PC-3 (cell line): ENCODE measurements at regions of chr4 and their contacts with region 1.

Region 1: DNA sequence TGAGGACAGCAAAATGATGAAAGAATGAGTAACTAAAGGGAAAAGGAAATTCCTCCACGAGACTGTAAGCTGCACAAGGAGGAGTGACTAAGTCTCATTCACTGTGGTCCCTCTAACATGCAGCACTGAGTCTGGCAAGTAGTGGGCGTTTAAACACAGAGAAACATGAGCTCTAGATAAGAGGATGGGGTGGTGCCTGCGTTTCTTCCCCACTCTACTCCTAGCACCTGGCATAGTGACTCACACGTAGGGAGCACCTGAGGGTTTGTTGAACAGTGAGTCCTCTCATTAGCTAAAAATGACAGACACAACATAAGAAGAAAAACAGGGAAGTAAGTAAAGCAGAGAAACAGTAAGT is 105.8 kb upstream of the CBR4 start:
- DNase-seq: peak; percentile 87
- ATAC-seq: peak; percentile 96
- H3K4me3 ChIP-seq: no peak overlapping the region
- H3K27ac ChIP-seq: peak overlapping the region; percentile 85
- H3K4me1 ChIP-seq: peaks cover 30% of the 10 kb centered on the region
- H3K27me3 ChIP-seq: no peaks in the 10 kb centered on the region
- CTCF ChIP-seq: peak; percentile 33

Region 2: GRCh38 chr4:169079942-169080827 is 35.7 kb before region 1 on chr4:
- CTCF ChIA-PET with region 1: no interaction called
- POLR2A ChIA-PET with region 1: no interaction called
- intact Hi-C with region 1: loop called (anchors 5 kb)
- DNase-seq: peak; percentile 76
- ATAC-seq: peak; percentile 88
- H3K4me3 ChIP-seq: peak overlapping the region; percentile 54
- H3K27ac ChIP-seq: peak overlapping the region; percentile 91
- H3K4me1 ChIP-seq: peaks cover 23% of the 10 kb centered on the region
- H3K27me3 ChIP-seq: no peaks in the 10 kb centered on the region
- CTCF ChIP-seq: no peak

Region 3: GRCh38 chr4:169225058-169225751 is 109.3 kb after region 1 on chr4:
- CTCF ChIA-PET with region 1: no interaction called
- POLR2A ChIA-PET with region 1: no interaction called
- intact Hi-C with region 1: loop called (anchors 10 kb)
- DNase-seq: peak; percentile 90
- ATAC-seq: peak; percentile 84
- H3K4me3 ChIP-seq: peak overlapping the region; percentile 52
- H3K27ac ChIP-seq: peak overlapping the region; percentile 99
- H3K4me1 ChIP-seq: peaks cover 49% of the 10 kb centered on the region
- H3K27me3 ChIP-seq: no peaks in the 10 kb centered on the region
- CTCF ChIP-seq: no peak

Region 4: DNA sequence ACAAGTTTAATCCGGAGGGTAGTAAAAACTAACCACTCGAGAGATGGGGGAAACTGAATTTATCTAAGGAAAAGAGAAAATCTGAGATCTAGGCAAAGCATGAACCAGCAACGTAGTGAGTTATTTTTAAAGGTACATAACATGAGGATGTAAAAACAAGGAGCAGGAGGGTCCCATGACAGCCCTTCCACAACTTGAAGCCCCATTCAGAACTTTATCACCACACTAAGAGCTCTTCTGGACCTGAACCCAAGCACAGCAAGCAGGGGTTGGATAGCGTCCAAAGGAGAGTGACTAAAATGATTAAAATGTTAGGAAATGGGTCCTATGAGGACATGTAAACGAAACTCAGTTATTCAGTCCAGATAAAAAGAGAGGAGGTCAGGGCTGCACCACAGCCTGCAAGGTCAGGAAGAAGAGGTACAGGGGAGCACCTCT is 138.7 kb after region 1 on chr4:
- CTCF ChIA-PET with region 1: no interaction called
- POLR2A ChIA-PET with region 1: interaction called, 12 read pairs
- intact Hi-C with region 1: no loop called
- DNase-seq: peak; percentile 79
- ATAC-seq: peak; percentile 14; the same call in 1 of the 2 replicates
- H3K4me3 ChIP-seq: peak overlapping the region; percentile 24
- H3K27ac ChIP-seq: peak overlapping the region; percentile 86
- H3K4me1 ChIP-seq: peaks cover 87% of the 10 kb centered on the region
- H3K27me3 ChIP-seq: no peaks in the 10 kb centered on the region
- CTCF ChIP-seq: no peak

Region 5: DNA sequence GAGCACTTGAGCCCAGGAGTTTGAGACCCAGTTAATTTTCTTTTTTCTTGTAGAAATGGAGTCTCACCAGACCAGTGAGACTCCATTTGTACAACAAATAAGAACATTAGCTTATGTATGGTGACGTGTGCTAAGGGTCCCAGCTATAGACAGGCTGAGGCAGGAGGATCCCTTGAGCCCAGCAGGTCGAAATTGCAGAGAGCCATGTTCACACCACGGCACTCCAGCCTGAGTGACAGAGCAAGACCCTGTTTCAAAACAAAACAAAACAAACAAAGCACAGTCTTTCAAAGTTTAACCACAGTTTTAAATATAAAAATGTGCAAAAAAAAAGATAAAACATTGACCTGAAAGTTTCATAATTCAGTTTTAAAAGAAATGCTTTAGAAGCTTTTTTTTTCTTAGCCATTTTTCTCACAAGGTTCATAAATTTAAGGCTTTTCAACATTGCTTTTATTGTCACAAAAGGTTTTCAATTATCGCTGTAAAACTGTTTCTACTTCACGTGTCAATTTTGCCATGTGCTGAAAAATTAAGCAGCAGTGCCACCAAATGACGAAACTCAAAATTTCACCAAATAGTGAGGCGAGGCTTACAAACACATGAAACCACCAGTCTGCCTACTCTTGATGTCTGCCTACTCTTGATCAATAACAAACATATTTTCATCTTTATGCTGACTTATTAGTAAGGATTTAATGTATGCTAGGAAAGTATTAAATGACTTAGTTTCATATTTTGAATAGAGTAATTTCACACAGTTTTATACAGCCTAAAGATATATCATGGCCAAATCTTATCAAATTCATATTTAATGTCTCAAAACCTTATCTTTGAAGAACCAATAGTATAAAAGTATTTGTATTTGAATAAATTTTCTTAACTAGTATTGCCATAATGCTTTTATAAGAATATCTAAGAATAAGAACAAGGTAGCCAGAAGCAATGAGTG is 370.2 kb after region 1 on chr4:
- CTCF ChIA-PET with region 1: no interaction called
- POLR2A ChIA-PET with region 1: no interaction called
- intact Hi-C with region 1: loop called (anchors 10 kb)
- DNase-seq: peak; percentile 74
- ATAC-seq: peak; percentile 54; the same call in 1 of the 2 replicates
- H3K4me3 ChIP-seq: peak overlapping the region; percentile 28
- H3K27ac ChIP-seq: no peak overlapping the region
- H3K4me1 ChIP-seq: peaks cover 18% of the 10 kb centered on the region
- H3K27me3 ChIP-seq: no peaks in the 10 kb centered on the region
- CTCF ChIP-seq: peak; percentile 75